ENCODE measurements at regions of chr5 and their contacts with region 1.

Region 1: DNA sequence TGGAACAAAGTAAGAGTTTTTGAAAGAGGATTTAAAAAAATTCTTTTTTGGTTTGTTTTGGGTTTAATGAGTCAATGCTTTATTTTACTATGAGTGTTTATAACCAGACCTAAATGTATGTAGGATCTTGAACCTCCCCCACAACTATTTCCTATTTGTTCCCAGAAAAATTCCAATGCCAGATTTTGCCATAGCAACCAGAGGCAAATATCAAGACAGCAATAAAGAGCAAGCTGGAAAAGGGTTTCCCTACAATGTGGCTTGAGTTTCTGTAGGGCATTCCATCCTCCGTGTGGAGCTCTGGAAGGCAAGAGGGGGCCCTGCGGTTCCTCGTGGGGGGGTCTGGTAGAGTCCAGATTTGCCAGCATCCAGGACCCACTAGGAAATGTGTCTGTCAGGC is 27.8 kb upstream of the GDNF start:
- DNase-seq: no peak
- ATAC-seq: no peak

Region 2: DNA sequence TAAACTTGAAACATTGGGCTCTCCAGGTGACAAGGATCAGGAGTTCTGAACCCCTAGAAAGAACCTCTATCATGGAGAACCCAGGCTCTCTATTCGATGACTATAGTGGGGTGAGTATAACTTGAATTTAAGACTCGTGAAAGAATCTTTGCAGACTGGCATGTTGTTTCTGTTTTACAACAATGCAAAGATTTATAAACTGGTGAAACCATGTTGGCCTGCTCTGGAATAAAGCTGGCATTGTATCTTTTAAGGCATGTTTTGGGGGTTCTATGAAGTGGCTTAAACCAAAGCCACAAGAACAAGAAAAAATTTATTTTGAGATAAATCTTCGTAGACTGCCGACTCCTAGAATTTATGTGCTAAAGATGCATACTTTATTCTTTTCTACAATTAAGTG is 18.0 kb before region 1 on chr5:
- intact Hi-C with region 1: loop called (anchors 1 kb)
- DNase-seq: no peak
- ATAC-seq: no peak

Region 3: DNA sequence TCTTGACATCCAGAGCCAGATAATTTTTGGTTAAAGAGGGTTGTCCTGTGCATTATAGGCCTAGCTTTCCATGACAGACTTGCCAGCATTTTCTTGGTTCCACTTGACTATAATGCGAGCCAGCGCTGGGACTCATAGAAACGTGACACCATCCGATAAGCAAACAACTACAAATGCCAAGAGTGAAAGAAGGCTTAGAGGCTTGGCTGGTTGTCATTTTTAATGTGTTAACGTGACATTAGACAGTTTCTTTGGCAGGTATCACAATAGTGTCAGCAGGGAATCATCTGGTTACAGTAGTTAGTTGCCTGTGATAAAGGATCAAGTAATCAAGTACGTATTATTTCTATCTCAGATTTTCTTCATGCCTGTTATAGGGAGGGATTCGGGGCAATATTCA is 708.8 kb after region 1 on chr5:
- intact Hi-C with region 1: no loop called
- DNase-seq: no peak
- ATAC-seq: peak; percentile 87